CD4-positive, alpha-beta T cell (primary cell): ENCODE measurements at regions of chr1 and their contacts with region 1.

Region 1: GRCh38 chr1:159891275-159892157 is 8.4 kb downstream of the CFAP45 start:
- DNase-seq: peak; percentile 54 to 90 (median 70)
- ATAC-seq: peak; percentile 95
- H3K4me3 ChIP-seq: no peak overlapping the region
- H3K4me3 Mint-ChIP-seq: no peak overlapping the region
- H3K27ac ChIP-seq: no peak overlapping the region
- H3K27ac Mint-ChIP-seq: no peak overlapping the region
- H3K4me1 ChIP-seq: peaks cover 13% of the 10 kb centered on the region
- H3K4me1 Mint-ChIP-seq: no peaks in the 10 kb centered on the region
- H3K27me3 ChIP-seq: no peaks in the 10 kb centered on the region
- H3K27me3 Mint-ChIP-seq: no peaks in the 10 kb centered on the region
- CTCF ChIP-seq: peak; percentile 99

Region 2: DNA sequence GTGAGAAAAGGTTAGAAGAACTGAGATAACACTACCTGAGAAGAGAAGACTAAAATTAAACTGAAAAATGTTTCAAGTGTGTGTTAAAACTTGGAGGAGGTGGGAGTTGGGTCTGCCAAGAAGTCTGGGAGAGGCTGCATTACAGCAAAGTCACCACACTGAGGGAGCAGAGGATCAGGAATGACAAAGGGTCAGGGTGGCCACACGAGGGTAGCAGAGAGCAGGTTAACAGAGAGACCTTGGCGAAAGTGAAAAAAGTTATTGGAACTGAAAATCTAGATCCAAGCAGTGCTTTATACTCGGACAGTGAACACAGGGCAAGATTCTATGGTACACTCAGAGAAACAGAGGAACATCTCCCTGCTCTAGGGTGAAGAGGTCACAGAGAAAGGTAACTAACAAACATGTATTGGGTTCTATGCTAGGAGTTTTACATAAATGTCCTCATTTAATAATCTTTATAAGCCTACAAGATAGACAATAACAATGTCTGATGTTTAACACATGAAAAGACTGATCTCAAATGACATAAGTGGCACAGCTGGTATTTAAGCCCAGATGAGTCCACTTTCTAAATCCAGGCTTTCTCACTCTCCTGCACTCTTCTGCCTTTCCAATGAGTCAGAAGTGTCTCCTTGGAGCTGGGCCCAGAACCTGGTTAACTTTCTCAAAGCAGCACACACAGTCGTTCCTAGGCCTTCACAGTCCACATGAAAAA is 730.4 kb before region 1 on chr1:
- CTCF ChIA-PET with region 1: no interaction called
- POLR2A ChIA-PET with region 1: no interaction called
- intact Hi-C with region 1: loop called in 1 of 2 experiments (anchors 5 kb)
- DNase-seq: peak; percentile 30 to 73 (median 45)
- ATAC-seq: peak; percentile 79
- H3K4me3 ChIP-seq: no peak overlapping the region
- H3K4me3 Mint-ChIP-seq: no peak overlapping the region
- H3K27ac ChIP-seq: no peak overlapping the region
- H3K27ac Mint-ChIP-seq: no peak overlapping the region
- H3K4me1 ChIP-seq: no peaks in the 10 kb centered on the region
- H3K4me1 Mint-ChIP-seq: no peaks in the 10 kb centered on the region
- H3K27me3 ChIP-seq: peaks cover 0 to 38% of the 10 kb centered on the region in 2 experiments
- H3K27me3 Mint-ChIP-seq: peaks cover 75% of the 10 kb centered on the region
- CTCF ChIP-seq: peak; percentile 81

Region 3: DNA sequence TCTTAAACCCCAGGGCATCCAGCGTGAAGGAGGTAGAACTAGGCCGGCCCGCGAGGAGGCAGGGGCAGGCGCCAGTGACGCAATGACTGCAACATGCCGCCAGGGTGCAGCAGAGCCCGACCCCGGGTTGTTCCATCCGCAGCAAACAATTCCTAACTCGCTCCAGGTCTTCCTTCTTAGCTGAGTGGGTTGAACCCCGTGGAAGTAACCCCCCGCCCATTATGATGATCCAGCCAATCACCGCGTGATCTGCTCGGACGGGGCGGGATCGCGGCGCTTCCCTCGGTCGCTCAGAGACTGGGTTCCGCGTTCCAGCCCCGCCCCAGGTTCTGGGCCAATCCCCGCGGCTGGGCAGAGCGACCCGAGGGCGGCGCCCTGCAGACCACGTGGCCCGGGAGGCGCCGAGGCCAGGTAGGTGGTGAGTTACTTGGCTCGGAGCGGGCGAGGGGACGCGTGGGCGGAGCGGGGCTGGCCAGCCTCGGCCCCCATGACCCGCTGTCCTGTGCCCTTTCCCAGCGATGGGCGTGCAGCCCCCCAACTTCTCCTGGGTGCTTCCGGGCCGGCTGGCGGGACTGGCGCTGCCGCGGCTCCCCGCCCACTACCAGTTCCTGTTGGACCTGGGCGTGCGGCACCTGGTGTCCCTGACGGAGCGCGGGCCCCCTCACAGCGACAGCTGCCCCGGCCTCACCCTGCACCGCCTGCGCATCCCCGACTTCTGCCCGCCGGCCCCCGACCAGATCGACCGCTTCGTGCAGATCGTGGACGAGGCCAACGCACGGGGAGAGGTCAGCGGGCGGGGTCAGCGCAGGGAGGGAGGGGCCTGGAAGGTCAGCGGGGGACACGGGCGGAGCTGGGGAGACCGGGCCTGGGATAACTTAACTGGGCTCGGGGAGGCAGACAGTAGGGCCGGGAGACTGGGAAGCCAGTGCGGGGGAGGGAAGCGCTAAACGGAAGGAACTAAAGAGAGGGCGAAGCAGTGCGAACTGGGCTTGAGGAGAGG is 110.6 kb before region 1 on chr1 and contains the start of gene DUSP23:
- CTCF ChIA-PET with region 1: interaction called, 12 read pairs
- POLR2A ChIA-PET with region 1: no interaction called
- intact Hi-C with region 1: loop called (anchors 1 kb)
- DNase-seq: peak; percentile 90 to 98 (median 96)
- ATAC-seq: peak; percentile 95
- H3K4me3 ChIP-seq: peak within 1 kb of the TSS; percentile 66
- H3K4me3 Mint-ChIP-seq: peak within 1 kb of the TSS; percentile 92
- H3K27ac ChIP-seq: peak within 1 kb of the TSS; percentile 35 to 45
- H3K27ac Mint-ChIP-seq: peak within 1 kb of the TSS; percentile 73
- H3K4me1 ChIP-seq: peaks cover 20% of the 10 kb centered on the region
- H3K4me1 Mint-ChIP-seq: peaks cover 24% of the 10 kb centered on the region
- H3K27me3 ChIP-seq: no peaks in the 10 kb centered on the region
- H3K27me3 Mint-ChIP-seq: no peaks in the 10 kb centered on the region
- CTCF ChIP-seq: peak; percentile 83
- total RNA-seq, gene DUSP23: 3.9 to 6.0 TPM

Region 4: GRCh38 chr1:159835862-159836525 is 55.5 kb before region 1 on chr1:
- CTCF ChIA-PET with region 1: interaction called, 3 read pairs
- POLR2A ChIA-PET with region 1: no interaction called
- intact Hi-C with region 1: loop called in 1 of 2 experiments (anchors 2 kb)
- DNase-seq: no peak
- ATAC-seq: no peak
- H3K4me3 ChIP-seq: no peak overlapping the region
- H3K4me3 Mint-ChIP-seq: no peak overlapping the region
- H3K27ac ChIP-seq: no peak overlapping the region
- H3K27ac Mint-ChIP-seq: no peak overlapping the region
- H3K4me1 ChIP-seq: no peaks in the 10 kb centered on the region
- H3K4me1 Mint-ChIP-seq: no peaks in the 10 kb centered on the region
- H3K27me3 ChIP-seq: no peaks in the 10 kb centered on the region
- H3K27me3 Mint-ChIP-seq: no peaks in the 10 kb centered on the region
- CTCF ChIP-seq: no peak

Region 5: DNA sequence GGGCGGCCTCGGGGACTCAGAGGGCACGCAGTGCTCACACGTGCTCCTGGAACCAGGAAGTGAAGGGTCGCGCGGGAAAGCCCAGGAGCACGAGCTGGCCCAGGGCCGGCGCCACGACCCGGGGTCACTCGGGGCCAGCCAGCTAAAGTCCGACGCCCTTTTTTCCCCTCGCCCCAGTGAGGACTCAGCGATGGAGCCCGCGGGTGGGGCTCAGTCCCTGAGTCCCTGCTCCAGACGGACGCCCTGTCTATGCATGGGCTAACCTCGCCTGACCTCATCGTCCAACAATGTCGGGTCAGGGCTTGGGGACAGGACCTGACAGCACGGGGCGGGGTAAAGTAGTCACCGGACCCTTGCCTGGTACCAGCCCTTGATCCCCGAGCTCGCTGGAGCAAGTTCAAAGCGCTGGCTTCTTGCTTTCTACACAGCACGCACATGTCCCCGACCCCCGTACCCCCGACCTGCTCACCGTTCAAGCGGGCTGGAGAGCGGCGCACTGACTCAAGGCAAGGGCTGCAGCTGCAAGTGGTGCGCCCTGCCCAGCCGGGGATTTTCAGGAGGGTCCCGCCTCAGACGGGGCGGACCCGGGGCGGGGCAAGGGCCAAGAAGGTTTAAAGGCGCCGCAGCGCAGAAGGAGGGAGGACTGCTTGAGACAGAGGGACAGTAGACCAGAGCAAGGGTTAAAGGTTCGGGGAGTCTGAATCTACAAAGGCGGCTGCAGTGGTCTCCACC is 33.6 kb after region 1 on chr1 and contains the start of gene TAGLN2:
- CTCF ChIA-PET with region 1: interaction called, 27 read pairs
- POLR2A ChIA-PET with region 1: interaction called, 18 read pairs
- intact Hi-C with region 1: loop called (anchors 2 kb)
- DNase-seq: peak; percentile 76 to 95 (median 88)
- ATAC-seq: peak; percentile 52
- H3K4me3 ChIP-seq: peak within 1 kb of the TSS; percentile 98
- H3K4me3 Mint-ChIP-seq: peak within 1 kb of the TSS; percentile 94
- H3K27ac ChIP-seq: peak within 1 kb of the TSS; percentile 99 to 100
- H3K27ac Mint-ChIP-seq: peak within 1 kb of the TSS; percentile 94
- H3K4me1 ChIP-seq: peaks cover 52% of the 10 kb centered on the region
- H3K4me1 Mint-ChIP-seq: peaks cover 44% of the 10 kb centered on the region
- H3K27me3 ChIP-seq: no peaks in the 10 kb centered on the region
- H3K27me3 Mint-ChIP-seq: no peaks in the 10 kb centered on the region
- CTCF ChIP-seq: no peak
- total RNA-seq, gene TAGLN2: 301 to 311 TPM